Common myeloid progenitor, CD34-positive (primary cell): ENCODE measurements at regions of chr14 and their contacts with region 1.

Region 1: DNA sequence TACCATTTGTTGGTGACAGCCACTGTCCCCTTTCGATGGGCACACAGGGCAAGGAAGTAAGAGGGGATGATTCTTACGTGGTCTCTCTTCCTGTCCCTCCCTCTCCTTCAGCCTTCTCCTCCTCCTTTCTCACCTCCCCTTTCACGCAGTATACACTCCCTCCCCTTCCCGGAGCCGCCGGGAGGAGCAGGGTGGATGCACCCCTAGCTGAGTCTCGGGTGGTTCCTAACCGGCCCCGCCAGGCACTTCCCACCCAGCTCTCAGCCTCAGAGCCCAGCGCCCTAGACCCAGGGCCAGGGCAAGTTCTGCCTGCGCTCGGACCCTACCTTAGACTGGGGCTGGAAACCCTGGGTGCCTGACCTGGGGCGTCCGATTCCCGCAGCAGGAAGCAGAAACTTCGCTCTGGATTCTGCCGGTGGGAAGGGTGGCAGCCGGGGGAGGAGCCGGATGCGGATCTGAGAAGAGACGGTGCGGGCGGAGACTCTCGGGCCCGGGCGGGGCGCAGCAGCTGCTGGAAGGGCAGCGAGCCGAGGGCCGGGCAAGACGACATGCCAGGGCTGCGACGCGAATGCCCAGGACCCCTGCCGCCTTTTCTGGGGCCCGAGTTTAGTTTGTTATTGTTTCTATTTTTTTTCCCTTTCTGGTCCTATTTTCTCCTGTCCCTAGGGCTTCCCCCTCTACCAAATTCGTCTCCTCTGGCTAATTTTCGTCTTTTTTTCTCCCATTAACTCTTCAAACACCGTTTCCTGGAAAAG is at the start of gene TEP1:
- DNase-seq: peak; percentile 55 to 71 (median 58)
- H3K4me3 ChIP-seq: peak within 1 kb of the TSS; percentile 80 to 97 (median 92)
- H3K27ac ChIP-seq: peak within 1 kb of the TSS; percentile 46 to 82
- H3K4me1 ChIP-seq: peaks cover 11 to 33% (median 24%) of the 10 kb centered on the region in 4 experiments
- H3K27me3 ChIP-seq: no peaks in the 10 kb centered on the region

Region 2: GRCh38 chr14:20327005-20327869 is 86.0 kb before region 1 on chr14:
- CTCF ChIA-PET with region 1: interaction called, 15 read pairs
- POLR2A ChIA-PET with region 1: no interaction called
- DNase-seq: peak; percentile 73 to 77 (median 75)
- H3K4me3 ChIP-seq: no peak overlapping the region
- H3K27ac ChIP-seq: no peak overlapping the region
- H3K4me1 ChIP-seq: peaks cover under 1 to 15% (median 4%) of the 10 kb centered on the region in 4 experiments
- H3K27me3 ChIP-seq: no peaks in the 10 kb centered on the region

Region 3: GRCh38 chr14:20427231-20428009 is 14.2 kb after region 1 on chr14:
- CTCF ChIA-PET with region 1: interaction called, 28 read pairs
- POLR2A ChIA-PET with region 1: no interaction called
- DNase-seq: peak; percentile 49 to 87 (median 77)
- H3K4me3 ChIP-seq: peak overlapping the region in 5 of 7 experiments; percentile 22 to 62 (median 49)
- H3K27ac ChIP-seq: peak overlapping the region; percentile 25 to 74
- H3K4me1 ChIP-seq: peaks cover 13 to 50% (median 38%) of the 10 kb centered on the region in 4 experiments
- H3K27me3 ChIP-seq: no peaks in the 10 kb centered on the region

Region 4: GRCh38 chr14:20440882-20441281 is 27.7 kb after region 1 on chr14:
- CTCF ChIA-PET with region 1: interaction called, 16 read pairs
- POLR2A ChIA-PET with region 1: no interaction called
- DNase-seq: peak in 2 of 3 donors; percentile 22 to 57
- H3K4me3 ChIP-seq: peak overlapping the region in 2 of 7 experiments; percentile 12 to 24
- H3K27ac ChIP-seq: peak overlapping the region in 1 of 2 experiments; percentile 25
- H3K4me1 ChIP-seq: peaks cover 14 to 35% (median 28%) of the 10 kb centered on the region in 4 experiments
- H3K27me3 ChIP-seq: no peaks in the 10 kb centered on the region

Region 5: DNA sequence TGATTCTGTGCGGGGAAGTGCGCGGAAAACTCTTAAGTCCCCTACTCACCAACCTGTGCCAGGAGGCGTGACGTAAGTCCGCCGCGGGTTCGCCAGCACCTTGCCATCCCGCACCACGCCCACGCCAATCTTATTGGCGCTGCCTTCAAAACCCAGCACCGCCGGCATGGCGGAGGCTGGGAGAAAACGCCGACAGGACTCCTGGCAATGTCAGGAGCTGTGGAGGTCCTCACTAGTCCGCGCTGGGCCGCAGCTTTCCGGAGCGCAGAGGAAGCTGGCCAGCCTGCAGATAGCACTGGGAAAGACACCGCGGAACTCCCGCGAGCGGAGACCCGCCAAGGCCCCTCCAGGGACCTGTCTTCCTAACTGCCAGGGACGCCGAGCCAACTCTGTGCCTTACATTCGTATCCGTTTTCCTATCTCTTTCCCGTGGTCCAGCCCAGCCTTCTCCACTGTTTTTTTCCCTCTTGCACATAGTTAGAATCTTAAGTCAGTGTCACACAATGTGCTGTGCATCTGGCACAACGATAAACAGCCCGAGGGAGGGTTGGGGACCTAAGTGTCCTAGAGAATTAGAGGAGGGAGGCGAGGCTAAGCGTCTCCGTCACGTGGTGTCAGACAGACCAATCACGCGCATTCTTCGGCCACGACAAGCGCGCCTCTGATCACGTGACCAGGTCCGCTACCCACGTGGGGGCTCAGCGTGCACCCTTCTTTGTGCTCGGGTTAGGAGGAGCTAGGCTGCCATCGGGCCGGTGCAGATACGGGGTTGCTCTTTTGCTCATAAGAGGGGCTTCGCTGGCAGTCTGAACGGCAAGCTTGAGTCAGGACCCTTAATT is 41.5 kb after region 1 on chr14 and contains the starts of genes APEX1 and OSGEP:
- CTCF ChIA-PET with region 1: interaction called, 34 read pairs
- POLR2A ChIA-PET with region 1: interaction called, 4 read pairs
- DNase-seq: peak; percentile 99 to 100 (median 100)
- H3K4me3 ChIP-seq: peak within 1 kb of the TSS; percentile 89 to 98 (median 93)
- H3K27ac ChIP-seq: peak within 1 kb of the TSS; percentile 98 to 99
- H3K4me1 ChIP-seq: peaks cover 7 to 49% (median 28%) of the 10 kb centered on the region in 4 experiments
- H3K27me3 ChIP-seq: no peaks in the 10 kb centered on the region

Region 6: DNA sequence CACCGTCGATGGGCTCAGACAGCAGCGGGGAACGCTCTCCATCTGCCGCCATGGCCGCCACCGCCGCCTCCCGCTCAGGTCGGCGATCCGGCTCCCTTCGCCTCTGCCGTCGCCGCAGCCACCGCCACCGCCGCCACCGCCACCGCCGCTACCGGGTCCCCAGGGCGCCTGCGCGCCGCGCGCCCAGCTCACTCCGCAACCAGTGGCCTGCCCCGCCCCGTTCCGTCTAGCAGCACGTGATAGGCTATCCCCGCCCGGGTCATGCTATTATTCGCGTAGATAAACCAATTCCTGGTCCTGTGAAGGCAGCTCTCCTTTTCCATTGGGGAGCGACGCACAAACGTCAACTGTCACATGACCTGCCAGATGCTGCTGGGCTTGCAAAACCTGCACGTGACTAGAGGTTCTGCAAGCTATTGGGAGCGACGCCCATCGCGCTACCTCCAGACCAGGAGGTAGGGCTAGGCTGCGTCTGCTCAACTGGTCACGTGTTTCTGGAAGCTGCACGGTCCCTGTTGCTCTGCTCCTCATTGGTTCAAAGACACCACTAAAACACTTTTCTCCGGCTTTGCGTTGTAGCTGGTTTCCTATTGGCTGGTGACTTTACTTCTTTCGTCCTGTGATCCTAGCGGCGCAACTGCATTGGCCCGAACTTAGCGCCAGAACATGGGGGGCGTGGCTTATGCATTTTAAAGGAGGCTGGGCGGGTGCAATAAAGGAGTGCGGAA is 48.2 kb after region 1 on chr14 and contains the start of gene PIP4P1:
- CTCF ChIA-PET with region 1: interaction called, 34 read pairs
- POLR2A ChIA-PET with region 1: interaction called, 3 read pairs
- DNase-seq: peak; percentile 100
- H3K4me3 ChIP-seq: peak within 1 kb of the TSS; percentile 71 to 91 (median 80)
- H3K27ac ChIP-seq: peak within 1 kb of the TSS; percentile 64 to 87
- H3K4me1 ChIP-seq: peaks cover 9 to 57% (median 26%) of the 10 kb centered on the region in 4 experiments
- H3K27me3 ChIP-seq: no peaks in the 10 kb centered on the region

Region 7: DNA sequence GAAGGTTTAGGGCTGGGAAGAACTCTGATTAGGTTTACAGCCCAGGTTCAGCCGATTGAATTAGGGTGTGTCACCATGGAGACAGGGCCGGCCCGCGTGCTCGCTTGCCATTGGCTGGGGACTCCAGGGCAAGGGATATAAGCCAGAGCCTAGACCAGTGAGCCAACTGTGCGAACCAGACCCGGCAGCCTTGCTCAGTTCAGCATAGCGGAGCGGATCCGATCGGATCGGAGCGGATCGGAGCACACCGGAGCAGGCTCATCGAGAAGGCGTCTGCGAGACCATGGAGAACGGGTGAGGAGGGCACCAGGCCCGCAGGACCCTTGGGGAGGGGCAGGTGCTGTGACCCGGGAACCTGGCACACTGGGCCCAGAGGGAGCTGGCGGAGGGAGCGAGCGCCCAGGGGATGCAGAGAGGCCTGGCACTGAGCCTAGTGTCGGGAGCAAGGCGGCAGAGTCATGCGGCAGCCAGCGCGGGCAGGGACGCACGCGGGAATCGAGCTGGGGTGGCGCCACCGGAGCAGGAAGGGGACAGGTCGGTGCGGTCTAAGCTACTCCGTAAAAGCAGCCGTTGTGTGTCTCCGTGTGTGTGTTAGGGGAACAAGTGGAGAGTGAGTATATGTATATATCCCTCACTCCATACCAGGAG is 56.1 kb after region 1 on chr14 and contains the start of gene PNP:
- CTCF ChIA-PET with region 1: interaction called, 14 read pairs
- POLR2A ChIA-PET with region 1: interaction called, 7 read pairs
- DNase-seq: peak; percentile 87 to 95 (median 94)
- H3K4me3 ChIP-seq: peak within 1 kb of the TSS; percentile 74 to 98 (median 87)
- H3K27ac ChIP-seq: peak within 1 kb of the TSS; percentile 68 to 88
- H3K4me1 ChIP-seq: peaks cover 8 to 28% (median 23%) of the 10 kb centered on the region in 4 experiments
- H3K27me3 ChIP-seq: no peaks in the 10 kb centered on the region